ENCODE measurements at regions of chr1 and their contacts with region 1.

Region 1: DNA sequence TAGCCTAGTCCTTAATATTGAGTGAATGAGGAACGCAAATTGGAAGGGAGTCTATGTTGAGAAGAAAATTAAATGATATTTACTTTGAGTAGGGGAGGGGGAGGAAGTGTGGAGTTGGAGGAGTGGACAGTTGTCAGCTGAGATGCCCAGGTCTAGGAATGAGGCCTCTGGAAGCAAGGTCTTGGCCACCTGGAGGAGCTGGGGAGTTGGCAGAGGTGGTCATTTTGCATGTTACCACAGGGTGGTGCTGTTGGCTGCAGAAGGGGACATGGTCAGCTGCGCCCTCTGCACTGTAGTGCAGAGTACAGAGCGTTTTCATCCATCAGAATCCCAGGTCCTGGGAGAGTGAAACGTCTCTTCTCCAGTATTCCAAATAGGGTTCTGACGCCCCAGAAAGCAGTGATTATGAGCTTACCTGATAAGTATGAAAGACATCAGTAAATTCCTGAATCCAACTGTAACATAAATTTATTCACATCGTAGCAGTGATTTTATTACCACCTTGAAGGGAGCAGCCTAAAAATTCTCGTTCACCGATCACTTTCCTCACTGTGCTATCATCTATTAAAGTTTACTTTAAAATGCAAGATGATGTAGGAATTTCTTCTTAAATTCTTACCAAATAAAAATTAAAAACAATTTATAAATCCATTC is 13.8 kb downstream of the PARK7 start:
- DNase-seq: peak; percentile 83 to 87 (median 86)
- ATAC-seq: peak; percentile 100
- H3K4me3 ChIP-seq: no peak overlapping the region
- H3K27ac ChIP-seq: no peak overlapping the region
- H3K4me1 ChIP-seq: no peaks in the 10 kb centered on the region
- H3K27me3 ChIP-seq: no peaks in the 10 kb centered on the region
- CTCF ChIP-seq: peak; percentile 98 to 100 (median 99)
- EP300 ChIP-seq: no peak
- POLR2A ChIP-seq: no peak
- RAD21 ChIP-seq: peak; percentile 79 to 89

Region 2: GRCh38 chr1:8010080-8010664 is 34.8 kb after region 1 on chr1:
- CTCF ChIA-PET with region 1: interaction called, 37 read pairs
- POLR2A ChIA-PET with region 1: interaction called, 3 read pairs
- in situ Hi-C with region 1: loop called (anchors 5 kb)
- intact Hi-C with region 1: loop called (anchors 2 kb)
- DNase-seq: no peak
- ATAC-seq: 0 out of 3 replicates have a peak, but pooled peaks have one; percentile 30
- H3K4me3 ChIP-seq: no peak overlapping the region
- H3K27ac ChIP-seq: no peak overlapping the region
- H3K4me1 ChIP-seq: peaks cover 10 to 22% of the 10 kb centered on the region in 2 experiments
- H3K27me3 ChIP-seq: no peaks in the 10 kb centered on the region
- CTCF ChIP-seq: no peak
- EP300 ChIP-seq: no peak
- POLR2A ChIP-seq: no peak
- RAD21 ChIP-seq: no peak